GM12878 (cell line): ENCODE measurements at regions of chr3 and their contacts with region 1.

Region 1: DNA sequence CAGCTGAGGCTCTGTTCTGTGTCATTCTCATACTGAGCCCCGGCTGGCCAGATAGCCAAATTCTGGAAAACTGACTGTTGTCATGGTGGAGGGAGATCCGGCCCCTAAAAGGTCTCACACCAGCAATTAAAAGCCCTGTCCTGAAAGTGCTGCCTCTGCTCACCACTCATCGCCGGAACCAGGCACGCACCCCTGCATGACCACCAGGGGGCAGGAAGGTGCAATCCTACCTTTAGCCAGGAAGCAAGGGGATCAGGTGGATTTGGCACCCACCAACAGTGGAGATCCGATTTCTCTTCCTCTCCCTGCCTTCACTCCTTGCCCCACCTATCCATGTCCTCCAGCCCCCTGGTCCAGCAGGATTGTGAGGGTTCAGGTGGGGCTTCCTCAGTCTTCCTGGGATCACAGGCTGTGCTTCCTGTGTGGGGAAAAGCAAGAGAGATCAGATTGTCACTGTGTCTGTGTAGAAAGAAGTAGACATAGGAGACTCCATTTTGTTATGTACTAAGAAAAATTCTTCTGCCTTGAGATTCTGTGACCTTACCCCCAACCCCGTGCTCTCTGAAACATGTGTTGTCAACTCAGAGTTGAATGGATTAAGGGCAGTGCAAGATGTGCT is 16.1 kb upstream of the CACNA2D2 start:
- DNase-seq: no peak
- ATAC-seq: peak; percentile 89
- H3K4me3 ChIP-seq: no peak overlapping the region
- H3K27ac ChIP-seq: no peak overlapping the region
- H3K4me1 ChIP-seq: no peaks in the 10 kb centered on the region
- H3K27me3 ChIP-seq: peaks cover 0 to 1% of the 10 kb centered on the region in 2 experiments
- CTCF ChIP-seq: peak; percentile 87 to 97 (median 96)
- EP300 ChIP-seq: no peak
- POLR2A ChIP-seq: no peak
- RAD21 ChIP-seq: peak; percentile 62

Region 2: DNA sequence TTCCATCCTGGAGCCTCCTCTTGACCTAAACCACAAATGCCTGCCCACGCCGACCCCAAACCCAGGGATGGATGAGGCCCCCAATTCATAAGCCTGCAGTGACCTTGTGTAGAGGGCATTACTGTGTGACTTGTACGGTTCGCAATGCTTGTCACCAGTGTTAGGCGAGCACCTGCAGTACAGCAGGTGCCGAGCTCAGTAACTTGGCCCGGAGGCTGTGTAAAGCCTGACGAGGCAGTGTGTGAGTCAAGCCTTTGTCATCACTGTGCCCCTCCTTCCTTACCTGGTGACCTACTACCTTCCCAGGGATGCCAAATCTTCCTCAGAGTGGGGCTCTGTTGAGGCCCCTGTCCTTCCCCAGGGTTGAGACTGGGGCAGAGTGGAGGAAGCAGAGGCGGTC is 123.1 kb before region 1 on chr3:
- CTCF ChIA-PET with region 1: no interaction called
- POLR2A ChIA-PET with region 1: no interaction called
- RAD21 ChIA-PET with region 1: no interaction called
- SMC1A ChIA-PET with region 1: no interaction called
- in situ Hi-C with region 1: no loop called
- intact Hi-C with region 1: no loop called
- DNase-seq: no peak
- ATAC-seq: no peak
- H3K4me3 ChIP-seq: no peak overlapping the region
- H3K27ac ChIP-seq: no peak overlapping the region
- H3K4me1 ChIP-seq: no peaks in the 10 kb centered on the region
- H3K27me3 ChIP-seq: no peaks in the 10 kb centered on the region; a peak in 3 of 4 replicates
- CTCF ChIP-seq: no peak
- EP300 ChIP-seq: no peak
- POLR2A ChIP-seq: no peak
- RAD21 ChIP-seq: no peak

Region 3: DNA sequence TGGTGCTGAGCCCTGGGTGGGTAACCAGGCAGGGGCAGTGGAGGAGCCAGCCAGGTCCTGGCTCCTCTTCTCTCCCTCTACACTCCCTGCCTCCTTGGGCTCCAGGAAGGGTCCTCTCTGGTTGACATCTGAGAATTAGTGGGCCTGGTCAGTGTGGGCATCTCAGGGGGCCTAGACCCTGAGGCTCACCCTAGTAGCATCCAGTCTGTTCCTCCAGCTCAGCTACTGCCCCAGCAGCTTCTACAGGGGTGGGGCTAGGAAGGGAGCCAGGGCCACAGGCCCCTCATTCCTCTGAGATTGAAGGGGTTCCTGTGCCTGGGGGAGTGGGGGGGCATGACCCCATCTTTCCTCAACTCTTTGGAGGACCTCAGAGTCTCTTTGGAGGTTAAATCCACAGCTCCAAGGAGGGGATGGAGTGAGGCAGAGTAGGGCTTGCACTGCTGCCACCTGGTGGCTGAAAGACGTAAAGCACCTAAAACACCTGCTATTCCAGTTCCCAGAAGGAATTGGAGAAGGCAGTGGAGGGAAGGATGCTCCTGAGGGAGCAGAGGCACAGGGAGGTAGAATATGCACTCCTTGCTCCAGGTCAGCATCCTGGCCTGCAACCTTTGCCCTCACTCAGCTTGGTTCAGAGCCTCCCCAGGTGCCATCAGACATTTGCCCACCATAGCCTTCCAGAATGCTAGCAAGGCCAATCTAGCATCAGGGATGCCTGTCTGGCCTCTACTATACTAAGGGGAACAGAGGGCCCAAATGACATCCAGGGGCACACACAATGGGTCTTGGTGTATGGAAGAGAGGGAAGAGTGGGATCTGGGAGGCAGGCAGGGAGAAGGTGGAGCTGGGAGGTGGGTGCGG is 22.8 kb after region 1 on chr3:
- CTCF ChIA-PET with region 1: interaction called, 28 read pairs
- POLR2A ChIA-PET with region 1: no interaction called
- RAD21 ChIA-PET with region 1: interaction called, 4 read pairs
- SMC1A ChIA-PET with region 1: interaction called, 3 read pairs
- in situ Hi-C with region 1: no loop called
- intact Hi-C with region 1: loop called (anchors 2 kb)
- DNase-seq: no peak
- ATAC-seq: peak; percentile 87
- H3K4me3 ChIP-seq: no peak overlapping the region
- H3K27ac ChIP-seq: no peak overlapping the region
- H3K4me1 ChIP-seq: no peaks in the 10 kb centered on the region
- H3K27me3 ChIP-seq: peaks cover 3 to 5% of the 10 kb centered on the region in 2 experiments; a peak in 3 of 4 replicates
- CTCF ChIP-seq: peak; percentile 86 to 90 (median 86)
- EP300 ChIP-seq: no peak
- POLR2A ChIP-seq: no peak
- RAD21 ChIP-seq: peak; percentile 54